H1 (cell line): ENCODE measurements at regions of chr2 and their contacts with region 1.

Region 1: GRCh38 chr2:160252278-160252887 is 52.3 kb upstream of the ITGB6 start:
- DNase-seq: no peak
- H3K4me3 ChIP-seq: no peak overlapping the region
- H3K27ac ChIP-seq: no peak overlapping the region
- H3K4me1 ChIP-seq: no peaks in the 10 kb centered on the region
- H3K27me3 ChIP-seq: no peaks in the 10 kb centered on the region
- CTCF ChIP-seq: peak in 2 of 3 experiments; percentile 23 to 57; a peak in 2 of 4 replicates
- EP300 ChIP-seq: no peak
- POLR2A ChIP-seq: no peak
- RAD21 ChIP-seq: peak; percentile 53 to 56

Region 2: DNA sequence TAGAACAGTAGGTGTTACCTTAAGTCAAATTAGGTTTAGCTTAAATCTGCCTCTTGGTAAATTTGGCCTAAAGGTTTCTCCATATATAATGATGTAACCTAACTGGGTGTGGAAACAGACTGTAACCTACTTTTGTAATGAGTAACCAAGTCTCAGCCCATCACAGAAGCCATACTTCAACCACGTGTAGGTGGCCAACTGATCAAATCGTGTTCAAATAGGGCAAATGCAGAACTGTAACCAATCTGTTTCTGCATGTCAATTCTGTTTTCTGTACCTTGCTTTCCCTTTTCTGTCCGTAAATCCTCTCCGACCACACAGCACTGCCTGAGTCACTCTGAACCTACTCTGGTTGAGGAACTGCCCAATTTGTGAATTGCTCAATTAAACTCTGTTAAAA is 156.0 kb before region 1 on chr2:
- CTCF ChIA-PET with region 1: no interaction called
- POLR2A ChIA-PET with region 1: no interaction called
- DNase-seq: no peak
- H3K4me3 ChIP-seq: no peak overlapping the region
- H3K27ac ChIP-seq: no peak overlapping the region
- H3K4me1 ChIP-seq: no peaks in the 10 kb centered on the region
- H3K27me3 ChIP-seq: no peaks in the 10 kb centered on the region
- CTCF ChIP-seq: no peak
- EP300 ChIP-seq: no peak
- POLR2A ChIP-seq: no peak
- RAD21 ChIP-seq: no peak

Region 3: GRCh38 chr2:160224060-160224459 is 28.3 kb before region 1 on chr2:
- CTCF ChIA-PET with region 1: interaction called, 11 read pairs
- POLR2A ChIA-PET with region 1: no interaction called
- DNase-seq: no peak
- H3K4me3 ChIP-seq: no peak overlapping the region
- H3K27ac ChIP-seq: no peak overlapping the region
- H3K4me1 ChIP-seq: peaks cover 0 to 5% (median 5%) of the 10 kb centered on the region in 4 experiments; a peak in 3 of 7 replicates
- H3K27me3 ChIP-seq: no peaks in the 10 kb centered on the region
- CTCF ChIP-seq: no peak
- EP300 ChIP-seq: no peak
- POLR2A ChIP-seq: no peak
- RAD21 ChIP-seq: no peak

Region 4: DNA sequence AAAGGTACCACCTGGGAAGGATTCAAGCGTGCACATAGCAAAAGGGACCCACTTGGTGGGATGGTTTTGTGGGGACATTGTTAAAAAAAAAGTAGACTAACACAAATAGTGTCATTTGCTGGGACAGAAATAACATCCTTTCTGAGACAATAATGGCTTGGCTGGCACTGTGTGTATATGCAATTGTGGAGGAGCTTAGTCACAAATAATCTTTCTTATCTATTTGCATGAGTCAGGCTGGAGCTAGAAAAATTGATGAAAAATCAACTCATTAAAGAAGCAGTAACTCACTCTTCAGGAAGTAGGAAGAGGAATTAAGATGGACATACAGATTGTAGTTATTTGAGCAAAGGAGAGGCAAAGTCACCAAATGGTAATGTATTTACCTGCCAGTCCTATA is 22.8 kb before region 1 on chr2:
- CTCF ChIA-PET with region 1: interaction called, 13 read pairs
- POLR2A ChIA-PET with region 1: no interaction called
- DNase-seq: no peak
- H3K4me3 ChIP-seq: no peak overlapping the region
- H3K27ac ChIP-seq: no peak overlapping the region
- H3K4me1 ChIP-seq: no peaks in the 10 kb centered on the region
- H3K27me3 ChIP-seq: no peaks in the 10 kb centered on the region
- CTCF ChIP-seq: no peak
- EP300 ChIP-seq: no peak
- POLR2A ChIP-seq: no peak
- RAD21 ChIP-seq: no peak

Region 5: GRCh38 chr2:160241251-160242137 is 10.9 kb before region 1 on chr2:
- CTCF ChIA-PET with region 1: interaction called, 29 read pairs
- POLR2A ChIA-PET with region 1: no interaction called
- DNase-seq: no peak
- H3K4me3 ChIP-seq: no peak overlapping the region
- H3K27ac ChIP-seq: no peak overlapping the region
- H3K4me1 ChIP-seq: no peaks in the 10 kb centered on the region
- H3K27me3 ChIP-seq: no peaks in the 10 kb centered on the region
- CTCF ChIP-seq: no peak
- EP300 ChIP-seq: no peak
- POLR2A ChIP-seq: no peak
- RAD21 ChIP-seq: no peak

Region 6: DNA sequence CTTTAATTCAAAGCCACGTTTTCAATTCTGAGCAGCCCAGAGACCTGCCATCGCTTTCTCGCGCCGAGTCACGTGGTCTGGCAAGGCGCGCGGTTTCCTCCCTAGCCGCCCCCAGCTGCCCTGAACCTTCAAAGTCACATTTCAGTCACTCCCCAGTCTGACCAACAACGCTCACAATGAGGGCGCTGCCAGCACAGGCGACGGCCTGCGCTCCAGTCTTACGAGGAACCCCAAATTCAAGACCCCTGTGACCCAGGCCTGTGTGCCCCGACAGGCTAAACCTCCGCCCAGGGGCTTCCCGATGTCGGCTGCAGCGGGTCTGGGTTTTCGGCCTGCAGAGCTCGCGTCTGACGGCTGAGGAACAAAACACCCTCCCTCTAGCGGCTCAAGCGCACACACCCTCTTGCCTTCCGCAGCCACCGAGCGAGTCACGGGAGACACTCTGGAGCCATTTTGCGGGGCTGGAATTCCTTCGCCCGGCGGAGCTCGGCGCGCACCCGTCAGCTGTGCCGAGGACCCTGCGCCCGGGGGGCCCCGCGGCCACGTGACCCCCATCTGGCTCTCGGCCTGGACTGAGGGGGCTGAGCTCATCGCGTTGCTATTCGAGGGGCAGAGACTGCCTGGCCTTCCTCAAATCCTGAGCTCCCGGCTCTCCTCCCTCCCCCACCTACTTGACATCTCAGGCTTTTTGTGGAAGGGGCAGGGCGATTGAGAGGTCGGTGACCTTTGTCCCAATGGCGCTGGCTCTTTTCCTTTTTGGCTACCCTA is 17.6 kb after region 1 on chr2:
- CTCF ChIA-PET with region 1: interaction called, 46 read pairs
- POLR2A ChIA-PET with region 1: interaction called, 7 read pairs
- DNase-seq: peak; percentile 85
- H3K4me3 ChIP-seq: peak overlapping the region; percentile 28 to 60 (median 54)
- H3K27ac ChIP-seq: peak overlapping the region; percentile 57
- H3K4me1 ChIP-seq: peaks cover 3 to 17% (median 11%) of the 10 kb centered on the region in 4 experiments
- H3K27me3 ChIP-seq: peaks cover 2 to 10% (median 7%) of the 10 kb centered on the region in 4 experiments
- CTCF ChIP-seq: peak; percentile 56 to 74 (median 61)
- EP300 ChIP-seq: no peak
- POLR2A ChIP-seq: peak in 1 of 2 experiments; percentile 79; a peak in 2 of 3 replicates
- RAD21 ChIP-seq: peak; percentile 41 to 51

Region 7: DNA sequence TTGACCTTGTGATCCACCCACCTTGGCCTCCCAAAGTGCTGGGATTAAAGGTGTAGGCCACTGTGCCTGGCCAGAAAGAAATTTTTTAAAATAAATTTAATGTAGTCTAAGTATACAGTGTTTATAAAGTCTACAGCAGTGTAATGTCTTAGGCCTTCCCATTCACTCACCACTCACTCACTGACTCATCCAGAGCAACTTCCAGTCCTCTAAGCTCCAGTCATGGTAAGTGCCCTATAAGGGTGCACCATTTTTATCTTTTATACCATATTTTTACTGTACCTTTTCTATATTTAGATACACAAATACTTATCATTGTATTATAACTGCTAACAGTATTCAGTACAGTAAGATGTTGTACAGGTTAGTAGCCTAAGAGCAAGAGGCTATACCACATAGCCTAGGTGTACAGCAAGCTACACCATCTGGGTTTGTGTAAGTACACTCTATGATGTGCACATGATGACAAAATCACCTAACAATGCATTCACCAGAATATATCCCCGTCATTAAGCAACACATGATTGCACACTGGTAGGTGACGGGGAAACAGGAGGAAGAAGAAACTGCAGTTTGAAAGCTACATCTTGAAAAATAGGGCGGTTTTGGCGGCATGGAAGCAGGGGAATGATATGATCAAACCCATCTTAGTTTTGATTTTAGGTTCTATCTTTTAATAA is 52.8 kb after region 1 on chr2:
- CTCF ChIA-PET with region 1: interaction called, 11 read pairs
- POLR2A ChIA-PET with region 1: no interaction called
- DNase-seq: no peak
- H3K4me3 ChIP-seq: no peak overlapping the region
- H3K27ac ChIP-seq: no peak overlapping the region
- H3K4me1 ChIP-seq: peaks cover 0 to 8% (median 3%) of the 10 kb centered on the region in 4 experiments; a peak in 2 of 7 replicates
- H3K27me3 ChIP-seq: no peaks in the 10 kb centered on the region; a peak in 1 of 7 replicates
- CTCF ChIP-seq: no peak
- EP300 ChIP-seq: no peak
- POLR2A ChIP-seq: no peak
- RAD21 ChIP-seq: no peak

Region 8: GRCh38 chr2:160351956-160352355 is 99.6 kb after region 1 on chr2:
- CTCF ChIA-PET with region 1: no interaction called
- POLR2A ChIA-PET with region 1: no interaction called
- DNase-seq: no peak
- H3K4me3 ChIP-seq: no peak overlapping the region
- H3K27ac ChIP-seq: no peak overlapping the region
- H3K4me1 ChIP-seq: no peaks in the 10 kb centered on the region; a peak in 1 of 7 replicates
- H3K27me3 ChIP-seq: no peaks in the 10 kb centered on the region
- CTCF ChIP-seq: no peak
- EP300 ChIP-seq: no peak
- POLR2A ChIP-seq: no peak
- RAD21 ChIP-seq: no peak

Region 9: GRCh38 chr2:160465406-160465805 is 213.0 kb after region 1 on chr2:
- CTCF ChIA-PET with region 1: no interaction called
- POLR2A ChIA-PET with region 1: no interaction called
- DNase-seq: no peak
- H3K4me3 ChIP-seq: no peak overlapping the region
- H3K27ac ChIP-seq: no peak overlapping the region
- H3K4me1 ChIP-seq: peaks cover 0 to 3% (median 0%) of the 10 kb centered on the region in 4 experiments; a peak in 1 of 7 replicates
- H3K27me3 ChIP-seq: no peaks in the 10 kb centered on the region
- CTCF ChIP-seq: no peak
- EP300 ChIP-seq: no peak
- POLR2A ChIP-seq: no peak
- RAD21 ChIP-seq: no peak

Region 10: DNA sequence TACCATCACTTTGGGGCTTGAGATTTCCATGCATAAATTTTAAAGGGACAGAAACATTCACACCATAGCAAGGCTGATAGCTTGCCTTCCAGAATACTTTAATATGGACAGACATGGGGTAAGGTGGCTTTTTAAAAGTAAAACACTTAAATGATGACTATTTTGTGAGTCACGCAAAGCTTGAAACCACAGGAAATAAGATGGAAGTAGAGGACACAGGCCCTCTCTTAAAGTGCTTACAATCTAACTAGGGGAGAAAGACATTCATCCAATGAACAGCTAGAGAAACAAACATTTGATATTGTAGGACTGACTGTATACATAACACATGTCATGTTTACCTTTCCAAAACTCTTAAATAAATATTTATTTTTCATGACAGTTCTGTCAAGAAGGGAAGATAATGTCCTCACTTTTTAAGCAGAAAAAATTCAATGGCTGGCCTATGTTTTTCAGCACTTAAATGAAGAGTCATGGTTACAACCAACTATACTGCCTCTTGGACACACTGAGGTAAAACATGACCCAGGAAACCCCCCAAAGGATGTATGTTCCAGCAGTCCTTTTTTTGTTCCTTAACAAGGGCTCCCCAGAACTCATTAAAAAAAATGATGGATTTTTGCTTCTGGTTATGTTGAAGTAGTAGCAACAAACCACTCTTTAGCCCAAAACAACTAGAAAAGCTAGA is 361.2 kb after region 1 on chr2:
- CTCF ChIA-PET with region 1: no interaction called
- POLR2A ChIA-PET with region 1: no interaction called
- DNase-seq: no peak
- H3K4me3 ChIP-seq: no peak overlapping the region
- H3K27ac ChIP-seq: no peak overlapping the region
- H3K4me1 ChIP-seq: peaks cover 0 to 2% (median 0%) of the 10 kb centered on the region in 4 experiments; a peak in 1 of 7 replicates
- H3K27me3 ChIP-seq: no peaks in the 10 kb centered on the region
- CTCF ChIP-seq: no peak
- EP300 ChIP-seq: no peak
- POLR2A ChIP-seq: no peak
- RAD21 ChIP-seq: no peak

Region 11: DNA sequence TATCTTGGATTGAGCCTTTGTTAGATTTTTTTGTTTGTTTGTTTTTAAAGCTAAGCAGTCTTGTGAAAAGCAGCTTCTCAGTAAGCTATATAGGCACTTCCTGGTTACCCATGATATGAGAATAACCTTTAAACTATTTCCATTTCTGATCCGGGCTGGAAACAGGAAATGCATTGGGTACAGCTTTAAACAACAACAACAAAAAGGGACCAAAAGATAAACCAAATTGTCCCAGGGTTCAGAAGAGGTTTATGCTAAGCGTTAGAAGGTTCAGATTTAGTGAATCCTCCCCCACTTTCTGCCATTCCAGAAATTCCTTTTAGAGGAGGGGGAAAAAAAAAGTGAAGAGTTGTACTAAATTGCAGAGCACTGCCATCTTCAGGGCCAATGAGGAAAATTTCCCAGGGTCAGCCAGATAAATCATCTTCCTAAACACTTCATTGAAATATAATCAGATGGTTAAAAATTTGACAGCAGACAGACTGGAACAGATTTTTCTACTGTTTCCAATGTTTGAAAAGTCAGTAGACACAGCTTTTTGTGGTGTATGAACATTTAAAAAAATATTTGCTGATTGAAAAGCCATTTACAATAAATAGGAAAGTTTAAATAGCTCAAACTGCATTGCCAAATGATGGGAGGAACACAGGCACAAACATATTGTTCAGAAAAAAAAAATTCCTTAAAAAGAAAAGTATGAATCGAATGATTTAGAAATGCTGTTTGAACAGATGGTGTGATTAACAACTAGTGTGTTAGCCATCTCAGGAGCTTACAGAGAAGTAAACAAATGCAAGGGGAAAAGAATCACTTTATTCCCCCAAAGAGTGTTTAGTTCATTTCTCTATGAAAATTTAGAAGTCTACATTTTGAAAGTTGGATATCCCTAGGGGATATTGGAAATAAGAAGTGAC is 717.9 kb after region 1 on chr2:
- CTCF ChIA-PET with region 1: interaction called, 10 read pairs
- POLR2A ChIA-PET with region 1: no interaction called
- DNase-seq: peak in 1 of 2 experiments; percentile 38
- H3K4me3 ChIP-seq: peak overlapping the region in 1 of 4 experiments; percentile 26; a peak in 1 of 8 replicates
- H3K27ac ChIP-seq: peak overlapping the region; percentile 78
- H3K4me1 ChIP-seq: no peaks in the 10 kb centered on the region
- H3K27me3 ChIP-seq: no peaks in the 10 kb centered on the region
- CTCF ChIP-seq: peak in 2 of 3 experiments; percentile 55 to 63; a peak in 3 of 4 replicates
- EP300 ChIP-seq: peak in 1 of 2 experiments; percentile 81; a peak in 1 of 3 replicates
- POLR2A ChIP-seq: no peak
- RAD21 ChIP-seq: peak; percentile 92